ENCODE measurements at regions of chr7 and their contacts with region 1.

Region 1: GRCh38 chr7:80047856-80048459 is 86.7 kb upstream of the GNAI1 start:
- DNase-seq: no peak
- ATAC-seq: no peak
- H3K4me3 ChIP-seq: no peak overlapping the region
- H3K4me3 Mint-ChIP-seq: no peak overlapping the region
- H3K27ac ChIP-seq: no peak overlapping the region
- H3K27ac Mint-ChIP-seq: no peak overlapping the region
- H3K4me1 ChIP-seq: no peaks in the 10 kb centered on the region
- H3K4me1 Mint-ChIP-seq: no peaks in the 10 kb centered on the region
- H3K27me3 ChIP-seq: no peaks in the 10 kb centered on the region
- H3K27me3 Mint-ChIP-seq: no peaks in the 10 kb centered on the region

Region 2: GRCh38 chr7:79272066-79272669 is 775.8 kb before region 1 on chr7:
- CTCF ChIA-PET with region 1: interaction called, 3 read pairs
- POLR2A ChIA-PET with region 1: no interaction called
- intact Hi-C with region 1: loop called in 1 of 2 experiments (anchors 1 kb)
- DNase-seq: peak in 2 of 9 donors; percentile 15 to 22
- ATAC-seq: no peak
- H3K4me3 ChIP-seq: no peak overlapping the region
- H3K4me3 Mint-ChIP-seq: no peak overlapping the region
- H3K27ac ChIP-seq: no peak overlapping the region
- H3K27ac Mint-ChIP-seq: no peak overlapping the region
- H3K4me1 ChIP-seq: no peaks in the 10 kb centered on the region
- H3K4me1 Mint-ChIP-seq: no peaks in the 10 kb centered on the region
- H3K27me3 ChIP-seq: no peaks in the 10 kb centered on the region
- H3K27me3 Mint-ChIP-seq: no peaks in the 10 kb centered on the region

Region 3: DNA sequence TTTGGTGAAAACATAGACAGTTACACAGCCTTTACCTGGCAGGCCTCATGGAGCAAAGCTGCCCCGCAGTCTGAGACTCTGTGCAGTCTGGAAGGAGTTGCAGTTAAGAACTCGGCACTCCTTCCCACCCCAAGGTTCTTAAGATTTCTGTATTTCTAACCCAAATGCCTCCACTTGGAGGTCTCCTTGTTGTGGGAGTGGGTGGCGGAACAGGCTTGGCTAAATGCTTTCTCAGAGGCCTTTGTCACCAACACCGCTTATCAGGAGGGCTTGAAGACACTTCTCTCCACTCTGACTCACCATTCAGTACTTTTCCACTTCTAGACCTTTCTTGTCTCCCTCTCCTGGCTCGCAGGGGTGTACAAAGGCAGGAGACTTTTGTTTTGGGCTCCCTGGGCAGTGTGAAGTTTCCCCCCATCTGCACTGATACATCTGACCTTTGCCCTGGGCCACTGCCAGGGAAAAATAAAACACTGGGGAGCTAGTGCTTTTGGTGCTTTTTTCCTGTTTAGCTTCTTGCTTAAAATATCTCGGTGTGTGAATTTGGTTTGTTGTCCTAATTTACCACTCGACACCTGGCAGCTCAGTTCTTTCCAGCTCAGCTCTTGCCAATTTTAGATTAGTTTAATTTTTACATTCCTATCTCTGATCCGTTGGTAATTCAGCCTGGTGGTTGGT is 543.1 kb before region 1 on chr7:
- CTCF ChIA-PET with region 1: no interaction called
- POLR2A ChIA-PET with region 1: no interaction called
- intact Hi-C with region 1: loop called in 1 of 2 experiments (anchors 5 kb)
- DNase-seq: peak in 1 of 9 donors; percentile 0
- ATAC-seq: no peak
- H3K4me3 ChIP-seq: no peak overlapping the region
- H3K4me3 Mint-ChIP-seq: no peak overlapping the region
- H3K27ac ChIP-seq: no peak overlapping the region
- H3K27ac Mint-ChIP-seq: peak overlapping the region in 1 of 9 donors; percentile 9
- H3K4me1 ChIP-seq: no peaks in the 10 kb centered on the region
- H3K4me1 Mint-ChIP-seq: no peaks in the 10 kb centered on the region
- H3K27me3 ChIP-seq: no peaks in the 10 kb centered on the region
- H3K27me3 Mint-ChIP-seq: no peaks in the 10 kb centered on the region

Region 4: GRCh38 chr7:79598351-79598750 is 449.6 kb before region 1 on chr7:
- CTCF ChIA-PET with region 1: no interaction called
- POLR2A ChIA-PET with region 1: no interaction called
- intact Hi-C with region 1: no loop called
- DNase-seq: no peak
- ATAC-seq: no peak
- H3K4me3 ChIP-seq: no peak overlapping the region
- H3K4me3 Mint-ChIP-seq: no peak overlapping the region
- H3K27ac ChIP-seq: no peak overlapping the region
- H3K27ac Mint-ChIP-seq: no peak overlapping the region
- H3K4me1 ChIP-seq: no peaks in the 10 kb centered on the region
- H3K4me1 Mint-ChIP-seq: no peaks in the 10 kb centered on the region
- H3K27me3 ChIP-seq: no peaks in the 10 kb centered on the region
- H3K27me3 Mint-ChIP-seq: no peaks in the 10 kb centered on the region

Region 5: GRCh38 chr7:79806161-79806734 is 241.7 kb before region 1 on chr7:
- CTCF ChIA-PET with region 1: interaction called, 5 read pairs
- POLR2A ChIA-PET with region 1: no interaction called
- intact Hi-C with region 1: loop called in 1 of 2 experiments (anchors 1 kb)
- DNase-seq: no peak
- ATAC-seq: no peak
- H3K4me3 ChIP-seq: no peak overlapping the region
- H3K4me3 Mint-ChIP-seq: no peak overlapping the region
- H3K27ac ChIP-seq: no peak overlapping the region
- H3K27ac Mint-ChIP-seq: no peak overlapping the region
- H3K4me1 ChIP-seq: no peaks in the 10 kb centered on the region
- H3K4me1 Mint-ChIP-seq: no peaks in the 10 kb centered on the region
- H3K27me3 ChIP-seq: no peaks in the 10 kb centered on the region
- H3K27me3 Mint-ChIP-seq: no peaks in the 10 kb centered on the region

Region 6: GRCh38 chr7:80159802-80160201 is 111.8 kb after region 1 on chr7:
- CTCF ChIA-PET with region 1: no interaction called
- POLR2A ChIA-PET with region 1: no interaction called
- intact Hi-C with region 1: no loop called
- DNase-seq: no peak
- ATAC-seq: no peak
- H3K4me3 ChIP-seq: no peak overlapping the region
- H3K4me3 Mint-ChIP-seq: no peak overlapping the region
- H3K27ac ChIP-seq: no peak overlapping the region
- H3K27ac Mint-ChIP-seq: no peak overlapping the region
- H3K4me1 ChIP-seq: no peaks in the 10 kb centered on the region
- H3K4me1 Mint-ChIP-seq: peaks cover 3 to 9% (median 6%) of the 10 kb centered on the region in 7 donors
- H3K27me3 ChIP-seq: no peaks in the 10 kb centered on the region
- H3K27me3 Mint-ChIP-seq: no peaks in the 10 kb centered on the region